ENCODE measurements at regions of chr17 and their contacts with region 1.

Region 1: DNA sequence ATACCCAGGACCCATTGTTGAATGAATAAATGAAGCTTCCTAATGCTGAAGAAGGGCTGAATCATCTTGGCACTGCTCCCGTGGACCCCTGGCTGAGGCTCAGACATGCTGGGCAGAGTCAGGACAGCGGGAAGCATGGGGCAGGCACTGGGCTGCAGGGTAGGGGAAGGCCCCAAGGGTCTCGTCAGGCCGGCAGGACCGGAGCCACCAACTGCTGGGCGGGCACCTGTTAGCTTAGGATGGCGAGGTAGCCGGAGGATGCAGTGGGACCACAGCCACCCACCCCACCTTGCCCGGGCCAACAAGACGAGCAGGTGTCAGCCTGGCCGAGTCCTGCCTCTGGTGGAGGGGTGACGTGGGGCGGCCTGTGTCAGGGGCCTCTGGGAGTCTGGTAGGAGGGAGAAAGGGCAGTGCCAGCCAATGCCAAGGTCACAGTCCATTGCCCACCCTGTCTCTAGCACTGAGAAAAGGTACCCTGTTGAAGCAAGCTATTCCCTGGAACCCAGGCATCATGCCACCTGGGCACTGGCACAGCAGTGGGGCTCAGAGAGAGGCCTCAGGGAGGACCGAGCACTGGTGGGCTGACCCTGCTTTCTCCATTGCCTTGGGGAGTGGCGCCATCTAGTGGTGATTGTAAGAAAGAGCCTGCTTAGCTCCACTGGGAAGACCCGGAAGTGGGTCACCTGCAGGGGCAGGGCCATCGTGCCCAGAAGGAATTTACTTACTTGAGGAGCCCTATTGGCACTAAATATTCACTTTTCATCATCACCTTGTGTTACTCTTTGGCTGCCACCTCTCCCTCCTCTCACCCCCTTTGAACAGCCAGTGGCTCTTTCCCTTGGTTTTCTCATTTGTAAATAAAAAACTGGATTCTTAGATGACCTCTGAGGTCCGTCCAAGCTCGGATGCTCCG is 3.0 kb upstream of the DLX3 start:
- DNase-seq: peak; percentile 89
- ATAC-seq: peak; percentile 85
- H3K4me3 Mint-ChIP-seq: no peak overlapping the region
- H3K27ac Mint-ChIP-seq: no peak overlapping the region
- H3K4me1 Mint-ChIP-seq: peaks cover 22% of the 10 kb centered on the region
- H3K27me3 Mint-ChIP-seq: peaks cover 71% of the 10 kb centered on the region
- CTCF ChIP-seq: peak; percentile 95

Region 2: GRCh38 chr17:49556223-49556971 is 441.6 kb before region 1 on chr17:
- CTCF ChIA-PET with region 1: interaction called, 23 read pairs
- POLR2A ChIA-PET with region 1: no interaction called
- intact Hi-C with region 1: no loop called
- DNase-seq: peak; percentile 90
- ATAC-seq: peak; percentile 98
- H3K4me3 Mint-ChIP-seq: no peak overlapping the region
- H3K27ac Mint-ChIP-seq: peak overlapping the region; percentile 20
- H3K4me1 Mint-ChIP-seq: peaks cover 2% of the 10 kb centered on the region
- H3K27me3 Mint-ChIP-seq: peaks cover 2% of the 10 kb centered on the region
- CTCF ChIP-seq: peak; percentile 98

Region 3: DNA sequence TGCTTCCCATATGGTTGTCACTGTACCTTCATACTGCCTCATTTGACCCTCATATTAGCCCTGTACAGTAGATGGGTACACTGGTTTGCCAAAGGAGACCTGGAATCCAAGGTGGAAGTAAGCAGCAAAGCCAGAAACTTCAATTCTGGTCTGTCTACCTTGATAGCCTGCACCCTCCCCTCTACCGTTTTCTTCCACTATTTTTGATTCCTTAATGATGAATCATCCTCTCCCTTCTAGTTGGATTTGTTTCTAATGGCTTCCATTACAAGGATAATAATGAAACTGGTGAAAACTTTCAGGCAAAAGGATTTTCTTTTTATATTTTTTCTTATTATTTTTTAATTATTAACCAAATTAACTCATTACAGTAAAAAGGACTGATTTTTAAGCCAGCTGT is 167.4 kb before region 1 on chr17:
- CTCF ChIA-PET with region 1: interaction called, 10 read pairs
- POLR2A ChIA-PET with region 1: no interaction called
- intact Hi-C with region 1: no loop called
- DNase-seq: no peak
- ATAC-seq: no peak
- H3K4me3 Mint-ChIP-seq: no peak overlapping the region
- H3K27ac Mint-ChIP-seq: no peak overlapping the region
- H3K4me1 Mint-ChIP-seq: no peaks in the 10 kb centered on the region
- H3K27me3 Mint-ChIP-seq: no peaks in the 10 kb centered on the region
- CTCF ChIP-seq: no peak

Region 4: GRCh38 chr17:49899191-49899485 is 98.9 kb before region 1 on chr17:
- CTCF ChIA-PET with region 1: interaction called, 23 read pairs
- POLR2A ChIA-PET with region 1: interaction called, 4 read pairs
- intact Hi-C with region 1: no loop called
- DNase-seq: peak; percentile 16
- ATAC-seq: no peak
- H3K4me3 Mint-ChIP-seq: no peak overlapping the region
- H3K27ac Mint-ChIP-seq: no peak overlapping the region
- H3K4me1 Mint-ChIP-seq: no peaks in the 10 kb centered on the region
- H3K27me3 Mint-ChIP-seq: peaks cover 49% of the 10 kb centered on the region
- CTCF ChIP-seq: no peak

Region 5: GRCh38 chr17:49952209-49952911 is 45.7 kb before region 1 on chr17:
- CTCF ChIA-PET with region 1: interaction called, 169 read pairs
- POLR2A ChIA-PET with region 1: interaction called, 6 read pairs
- intact Hi-C with region 1: loop called (anchors 2 kb)
- DNase-seq: peak; percentile 95
- ATAC-seq: peak; percentile 98
- H3K4me3 Mint-ChIP-seq: no peak overlapping the region
- H3K27ac Mint-ChIP-seq: no peak overlapping the region
- H3K4me1 Mint-ChIP-seq: no peaks in the 10 kb centered on the region
- H3K27me3 Mint-ChIP-seq: peaks cover 36% of the 10 kb centered on the region
- CTCF ChIP-seq: peak; percentile 87

Region 6: DNA sequence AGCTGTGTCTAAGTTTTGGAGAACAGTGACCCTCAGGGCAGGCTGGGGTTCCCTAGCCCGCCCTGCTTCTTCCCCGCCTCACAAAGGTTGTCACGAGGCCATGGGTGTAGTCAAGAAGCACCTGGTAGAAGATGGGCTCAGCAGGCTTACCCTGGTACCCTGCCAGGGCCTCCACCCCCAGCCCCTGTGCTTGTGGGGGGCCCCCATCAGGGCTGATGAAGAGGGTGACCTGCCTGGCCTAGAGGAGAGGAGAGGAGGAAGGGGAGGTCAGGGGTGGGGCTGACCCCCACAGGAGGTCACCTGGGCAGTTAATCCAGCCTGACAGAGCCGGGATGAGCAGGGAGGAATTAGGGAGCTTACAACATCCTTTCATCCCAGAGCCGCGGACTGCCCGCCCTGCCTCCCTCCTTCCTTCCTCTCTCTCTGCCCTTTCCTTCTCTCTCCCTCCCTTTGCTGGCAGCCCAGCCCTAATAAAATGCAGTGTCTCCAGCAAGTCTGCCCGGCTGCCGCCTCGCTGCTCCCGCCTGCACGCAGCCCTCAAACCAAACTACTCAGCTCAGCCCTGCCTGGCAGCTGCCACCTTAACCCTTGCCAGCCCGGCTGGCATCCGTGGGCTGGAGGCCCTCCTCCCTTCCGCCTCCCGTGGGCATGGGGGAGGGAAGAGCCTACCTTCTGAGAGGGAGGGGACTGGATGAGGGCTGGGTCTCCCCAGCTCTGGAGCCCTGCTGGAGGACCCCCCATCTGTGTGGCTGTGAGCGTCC is 10.2 kb before region 1 on chr17:
- CTCF ChIA-PET with region 1: interaction called, 140 read pairs
- POLR2A ChIA-PET with region 1: no interaction called
- intact Hi-C with region 1: no loop called
- DNase-seq: no peak
- ATAC-seq: no peak
- H3K4me3 Mint-ChIP-seq: no peak overlapping the region
- H3K27ac Mint-ChIP-seq: no peak overlapping the region
- H3K4me1 Mint-ChIP-seq: no peaks in the 10 kb centered on the region
- H3K27me3 Mint-ChIP-seq: peaks cover 43% of the 10 kb centered on the region
- CTCF ChIP-seq: no peak

Region 7: GRCh38 chr17:50133028-50133768 is 135.2 kb after region 1 on chr17:
- CTCF ChIA-PET with region 1: no interaction called
- POLR2A ChIA-PET with region 1: no interaction called
- intact Hi-C with region 1: no loop called
- DNase-seq: no peak
- ATAC-seq: no peak
- H3K4me3 Mint-ChIP-seq: no peak overlapping the region
- H3K27ac Mint-ChIP-seq: no peak overlapping the region
- H3K4me1 Mint-ChIP-seq: peaks cover 22% of the 10 kb centered on the region
- H3K27me3 Mint-ChIP-seq: peaks cover 16% of the 10 kb centered on the region
- CTCF ChIP-seq: no peak

Region 8: DNA sequence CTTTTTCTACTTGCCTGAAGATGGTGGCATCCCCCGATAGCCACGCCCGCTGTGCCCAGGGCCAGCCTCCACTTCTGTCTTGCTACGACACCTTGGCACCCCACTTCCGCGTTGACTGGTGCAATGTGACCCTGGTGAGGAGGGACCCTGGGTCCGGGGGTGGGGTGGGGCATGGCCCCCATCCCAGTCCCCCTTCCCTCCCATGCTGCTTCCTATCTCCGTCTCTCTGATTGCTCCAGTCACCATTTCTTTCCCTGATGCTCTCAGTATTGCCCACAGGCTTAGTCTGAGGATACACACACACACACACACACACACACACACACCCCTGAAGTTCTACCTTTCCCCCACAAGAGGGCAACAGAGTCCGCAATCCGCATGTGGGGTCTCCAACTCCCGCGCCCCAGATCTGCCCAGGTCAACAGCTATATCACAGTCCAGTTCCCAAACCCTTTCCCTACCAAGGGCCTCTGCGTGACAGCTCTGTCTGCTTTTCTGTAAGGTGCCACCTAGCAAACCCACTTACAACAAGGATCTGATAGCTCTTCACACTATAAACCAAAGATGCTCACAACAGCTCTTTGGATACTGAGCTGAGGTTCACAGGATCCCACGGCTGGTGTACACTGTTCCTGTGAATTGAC is 171.2 kb after region 1 on chr17:
- CTCF ChIA-PET with region 1: no interaction called
- POLR2A ChIA-PET with region 1: no interaction called
- intact Hi-C with region 1: no loop called
- DNase-seq: peak; percentile 71
- ATAC-seq: peak; percentile 86
- H3K4me3 Mint-ChIP-seq: peak overlapping the region; percentile 44
- H3K27ac Mint-ChIP-seq: peak overlapping the region; percentile 60
- H3K4me1 Mint-ChIP-seq: peaks cover 10% of the 10 kb centered on the region
- H3K27me3 Mint-ChIP-seq: peaks cover 3% of the 10 kb centered on the region
- CTCF ChIP-seq: peak; percentile 63